Endothelial cell of umbilical vein (primary cell): ENCODE measurements at regions of chr9 and their contacts with region 1.

Region 1: DNA sequence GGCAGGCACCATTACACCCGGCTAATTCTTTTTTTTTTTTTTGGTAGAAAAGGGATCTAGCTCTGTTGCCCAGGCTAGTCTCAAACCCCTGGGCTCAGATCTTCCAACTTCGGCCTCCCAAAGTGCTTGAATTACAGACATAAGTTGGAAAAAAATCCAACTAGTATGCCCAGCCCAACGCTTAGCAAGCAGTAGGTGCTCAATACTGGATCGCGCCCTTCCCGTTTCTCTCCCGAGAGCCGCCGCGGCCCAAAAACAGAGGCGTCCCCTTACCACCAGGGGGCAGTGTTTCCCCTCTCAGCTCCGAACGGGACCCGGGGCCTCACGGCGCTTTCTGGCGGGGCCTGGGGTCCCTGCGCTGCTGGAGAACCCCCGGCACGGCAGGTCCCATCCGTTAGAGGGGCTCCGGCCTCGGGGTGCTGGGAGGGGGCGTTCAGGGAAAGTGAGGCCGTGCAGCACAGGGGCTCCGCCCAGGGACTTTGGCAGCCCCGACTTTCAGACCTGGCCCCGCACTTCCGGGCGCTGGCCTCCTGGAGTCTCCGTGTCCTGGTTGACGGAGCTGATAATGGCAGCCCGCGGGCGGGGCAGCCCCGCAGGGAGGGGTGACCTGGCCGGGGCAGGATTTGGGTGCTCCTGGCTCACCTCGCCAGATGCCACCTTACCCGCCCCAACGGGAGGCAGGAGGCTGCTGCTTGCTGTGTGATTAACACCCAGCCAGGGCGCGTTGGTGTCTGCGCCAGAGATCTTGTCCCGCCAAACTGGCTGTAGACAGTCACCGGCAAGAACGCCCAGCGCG is 15.2 kb downstream of the PTGES start:
- DNase-seq: peak; percentile 59
- H3K4me3 ChIP-seq: peak overlapping the region; percentile 27 to 45 (median 44)
- H3K27ac ChIP-seq: no peak overlapping the region
- H3K4me1 ChIP-seq: peaks cover 5% of the 10 kb centered on the region
- H3K27me3 ChIP-seq: no peaks in the 10 kb centered on the region
- CTCF ChIP-seq: peak; percentile 91
- POLR2A ChIP-seq: no peak

Region 2: GRCh38 chr9:129131300-129132145 is 606.2 kb before region 1 on chr9:
- CTCF ChIA-PET with region 1: interaction called, 11 read pairs
- POLR2A ChIA-PET with region 1: no interaction called
- dilution Hi-C with region 1: no loop called
- intact Hi-C with region 1: no loop called
- DNase-seq: peak; percentile 65
- H3K4me3 ChIP-seq: no peak overlapping the region
- H3K27ac ChIP-seq: no peak overlapping the region
- H3K4me1 ChIP-seq: peaks cover 12% of the 10 kb centered on the region
- H3K27me3 ChIP-seq: no peaks in the 10 kb centered on the region
- CTCF ChIP-seq: peak; percentile 96 to 99
- POLR2A ChIP-seq: no peak

Region 3: GRCh38 chr9:129726322-129727160 is 11.1 kb before region 1 on chr9:
- CTCF ChIA-PET with region 1: interaction called, 43 read pairs
- POLR2A ChIA-PET with region 1: no interaction called
- dilution Hi-C with region 1: no loop called
- intact Hi-C with region 1: no loop called
- DNase-seq: peak; percentile 51
- H3K4me3 ChIP-seq: no peak overlapping the region
- H3K27ac ChIP-seq: no peak overlapping the region
- H3K4me1 ChIP-seq: no peaks in the 10 kb centered on the region
- H3K27me3 ChIP-seq: no peaks in the 10 kb centered on the region
- CTCF ChIP-seq: peak; percentile 90 to 97
- POLR2A ChIP-seq: no peak

Region 4: GRCh38 chr9:129763264-129763926 is 25.7 kb after region 1 on chr9:
- CTCF ChIA-PET with region 1: interaction called, 10 read pairs
- POLR2A ChIA-PET with region 1: no interaction called
- dilution Hi-C with region 1: no loop called
- intact Hi-C with region 1: no loop called
- DNase-seq: no peak
- H3K4me3 ChIP-seq: no peak overlapping the region
- H3K27ac ChIP-seq: no peak overlapping the region
- H3K4me1 ChIP-seq: peaks cover 3% of the 10 kb centered on the region
- H3K27me3 ChIP-seq: no peaks in the 10 kb centered on the region
- CTCF ChIP-seq: no peak
- POLR2A ChIP-seq: no peak

Region 5: DNA sequence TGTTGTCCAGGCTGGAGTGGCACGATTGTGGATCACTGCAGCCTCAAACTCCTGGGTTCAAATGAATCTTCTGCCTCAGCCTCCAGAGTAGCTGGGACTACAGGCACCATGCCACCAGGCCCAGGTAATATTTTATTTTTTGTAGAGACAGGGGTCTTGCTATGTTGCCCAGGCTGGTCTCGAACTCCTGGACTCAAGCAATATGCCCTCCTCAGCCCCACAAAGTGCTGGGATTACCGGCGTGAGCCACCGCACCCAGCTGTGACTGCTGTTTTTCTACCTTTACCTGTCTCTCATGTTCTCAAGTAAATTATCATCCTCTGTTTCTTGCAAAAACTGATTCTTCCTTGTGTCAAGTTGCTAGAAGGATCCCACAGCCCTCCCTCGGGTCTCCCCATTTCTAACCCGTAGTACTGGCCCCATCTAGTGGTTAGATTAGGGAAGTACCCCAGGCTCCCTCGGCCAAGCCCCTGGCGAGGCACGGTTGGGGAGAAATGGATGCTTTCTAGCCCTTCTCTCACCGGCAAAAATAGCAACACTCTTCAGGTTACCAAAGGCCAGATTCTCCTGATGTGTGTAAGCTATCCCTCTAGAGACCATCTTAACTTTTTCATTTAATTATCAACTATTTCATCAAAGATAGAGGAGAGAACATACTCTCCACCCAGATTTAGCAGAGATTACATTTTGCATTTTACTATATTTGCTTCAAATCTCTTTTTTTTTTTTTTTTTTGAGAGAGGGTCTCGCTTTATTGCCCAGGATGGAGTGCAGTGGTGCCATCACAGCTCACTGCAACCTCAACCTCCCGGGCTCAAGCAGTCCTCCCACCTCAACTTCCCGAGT is 46.1 kb after region 1 on chr9:
- CTCF ChIA-PET with region 1: interaction called, 127 read pairs
- POLR2A ChIA-PET with region 1: no interaction called
- dilution Hi-C with region 1: no loop called
- intact Hi-C with region 1: loop called (anchors 1 kb)
- DNase-seq: peak; percentile 62
- H3K4me3 ChIP-seq: no peak overlapping the region
- H3K27ac ChIP-seq: no peak overlapping the region
- H3K4me1 ChIP-seq: no peaks in the 10 kb centered on the region
- H3K27me3 ChIP-seq: peaks cover 0 to 2% of the 10 kb centered on the region in 2 experiments
- CTCF ChIP-seq: peak; percentile 81 to 84
- POLR2A ChIP-seq: no peak

Region 6: GRCh38 chr9:130962418-130963316 is 1225.0 kb after region 1 on chr9:
- CTCF ChIA-PET with region 1: no interaction called
- POLR2A ChIA-PET with region 1: no interaction called
- dilution Hi-C with region 1: no loop called
- intact Hi-C with region 1: no loop called
- DNase-seq: peak; percentile 95
- H3K4me3 ChIP-seq: no peak overlapping the region
- H3K27ac ChIP-seq: peak overlapping the region; percentile 50
- H3K4me1 ChIP-seq: peaks cover 12% of the 10 kb centered on the region
- H3K27me3 ChIP-seq: no peaks in the 10 kb centered on the region
- CTCF ChIP-seq: no peak
- POLR2A ChIP-seq: no peak